PC-9 (cell line): ENCODE measurements at regions of chr2 and their contacts with region 1.

Region 1: DNA sequence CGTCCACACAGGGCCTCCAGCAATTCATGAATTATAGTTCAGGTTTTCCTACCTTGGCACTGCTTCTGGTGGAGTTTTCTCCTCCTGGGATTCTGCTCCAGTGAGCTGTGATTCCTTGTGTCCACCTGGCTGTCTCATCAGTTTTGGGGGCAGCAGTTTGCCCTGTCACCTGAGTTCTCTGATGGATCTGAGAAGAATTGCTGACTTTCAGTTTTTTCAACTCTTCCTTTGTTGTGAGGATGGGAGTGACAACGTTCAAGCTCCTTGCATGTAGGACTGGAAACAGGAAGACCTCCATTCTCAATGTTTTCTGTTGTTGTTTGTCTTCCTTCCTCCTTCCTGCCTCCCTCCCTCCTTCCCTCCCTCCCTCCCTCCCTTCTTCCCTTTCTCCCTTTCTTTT is 359.0 kb downstream of the TSN start:
- DNase-seq: no peak
- H3K4me3 ChIP-seq: no peak overlapping the region
- H3K27ac ChIP-seq: no peak overlapping the region
- H3K4me1 ChIP-seq: no peaks in the 10 kb centered on the region
- H3K27me3 ChIP-seq: peaks cover 49% of the 10 kb centered on the region
- CTCF ChIP-seq: no peak

Region 2: GRCh38 chr2:122135021-122135937 is 20.9 kb after region 1 on chr2:
- CTCF ChIA-PET with region 1: no interaction called
- POLR2A ChIA-PET with region 1: no interaction called
- intact Hi-C with region 1: loop called (anchors 1 kb)
- DNase-seq: no peak
- H3K4me3 ChIP-seq: no peak overlapping the region
- H3K27ac ChIP-seq: no peak overlapping the region
- H3K4me1 ChIP-seq: no peaks in the 10 kb centered on the region
- H3K27me3 ChIP-seq: peaks cover 31% of the 10 kb centered on the region
- CTCF ChIP-seq: no peak